ENCODE measurements at regions of chr10 and their contacts with region 1.

Region 1: GRCh38 chr10:112716924-112717413 is 233.1 kb upstream of the TCF7L2 start:
- DNase-seq: no peak
- ATAC-seq: no peak
- H3K4me3 ChIP-seq: no peak overlapping the region
- H3K27ac ChIP-seq: no peak overlapping the region
- H3K4me1 ChIP-seq: no peaks in the 10 kb centered on the region
- H3K27me3 ChIP-seq: no peaks in the 10 kb centered on the region
- CTCF ChIP-seq: no peak

Region 2: GRCh38 chr10:112763916-112764520 is 47.0 kb after region 1 on chr10:
- intact Hi-C with region 1: no loop called
- DNase-seq: no peak
- ATAC-seq: no peak
- H3K4me3 ChIP-seq: no peak overlapping the region
- H3K27ac ChIP-seq: no peak overlapping the region
- H3K4me1 ChIP-seq: no peaks in the 10 kb centered on the region
- H3K27me3 ChIP-seq: no peaks in the 10 kb centered on the region
- CTCF ChIP-seq: no peak

Region 3: DNA sequence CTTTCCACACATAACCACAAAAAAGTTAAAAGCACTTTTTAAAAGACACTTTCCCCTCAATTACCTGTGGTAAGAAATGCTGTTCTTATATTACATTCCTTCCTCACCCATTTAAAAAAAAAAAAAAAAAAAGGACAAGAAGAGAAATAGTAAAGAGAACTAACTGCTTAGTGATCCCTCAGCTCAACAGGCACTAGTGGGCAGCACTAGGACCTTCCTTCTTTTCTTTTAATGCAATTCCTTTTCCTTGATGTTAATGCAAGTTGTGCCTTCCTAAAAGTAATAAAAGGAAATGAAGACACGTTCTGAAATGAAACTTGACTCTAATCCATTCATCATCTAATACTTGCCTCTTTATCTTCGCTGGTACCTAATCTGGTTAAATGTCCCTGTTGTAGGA is 422.7 kb after region 1 on chr10:
- intact Hi-C with region 1: loop called (anchors 10 kb)
- DNase-seq: no peak
- ATAC-seq: no peak
- H3K4me3 ChIP-seq: no peak overlapping the region
- H3K27ac ChIP-seq: no peak overlapping the region
- H3K4me1 ChIP-seq: no peaks in the 10 kb centered on the region
- H3K27me3 ChIP-seq: no peaks in the 10 kb centered on the region
- CTCF ChIP-seq: peak; percentile 20